ENCODE measurements at regions of chr17 and their contacts with region 1.

Region 1: DNA sequence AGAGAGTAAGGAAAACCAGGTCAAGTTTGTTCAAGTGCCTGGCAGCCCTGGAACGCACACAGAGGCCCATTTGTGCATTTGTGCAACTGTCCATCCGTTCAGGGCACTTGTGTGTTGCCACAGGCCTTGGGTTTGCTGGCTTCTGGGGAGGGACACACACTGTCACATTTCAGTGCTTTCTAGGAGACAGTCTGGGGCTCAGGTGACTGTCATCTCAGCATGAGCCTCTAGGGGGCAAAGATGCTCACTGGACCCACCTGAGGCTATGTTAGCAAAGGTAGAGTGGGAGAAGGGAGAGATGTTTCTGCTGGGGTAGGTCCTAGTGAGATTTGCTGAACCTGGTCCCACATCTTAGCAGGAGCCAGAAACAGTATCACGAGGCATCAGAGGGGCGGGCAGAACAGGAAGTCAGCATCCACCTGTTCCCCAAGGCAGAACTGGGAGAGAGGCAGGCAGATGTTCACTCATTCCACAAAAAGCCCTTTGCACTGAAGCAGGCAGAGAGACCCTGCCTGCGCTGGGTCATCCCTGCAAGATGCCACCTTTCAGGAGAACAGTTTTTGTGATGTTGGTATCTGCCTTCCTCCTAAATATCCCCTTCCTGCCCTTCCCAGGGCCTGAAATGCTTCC is 48.5 kb downstream of the RAI1 start:
- H3K4me3 Mint-ChIP-seq: no peak overlapping the region
- H3K27ac Mint-ChIP-seq: no peak overlapping the region
- H3K4me1 Mint-ChIP-seq: peaks cover 53% of the 10 kb centered on the region
- H3K27me3 Mint-ChIP-seq: peaks cover 4% of the 10 kb centered on the region

Region 2: DNA sequence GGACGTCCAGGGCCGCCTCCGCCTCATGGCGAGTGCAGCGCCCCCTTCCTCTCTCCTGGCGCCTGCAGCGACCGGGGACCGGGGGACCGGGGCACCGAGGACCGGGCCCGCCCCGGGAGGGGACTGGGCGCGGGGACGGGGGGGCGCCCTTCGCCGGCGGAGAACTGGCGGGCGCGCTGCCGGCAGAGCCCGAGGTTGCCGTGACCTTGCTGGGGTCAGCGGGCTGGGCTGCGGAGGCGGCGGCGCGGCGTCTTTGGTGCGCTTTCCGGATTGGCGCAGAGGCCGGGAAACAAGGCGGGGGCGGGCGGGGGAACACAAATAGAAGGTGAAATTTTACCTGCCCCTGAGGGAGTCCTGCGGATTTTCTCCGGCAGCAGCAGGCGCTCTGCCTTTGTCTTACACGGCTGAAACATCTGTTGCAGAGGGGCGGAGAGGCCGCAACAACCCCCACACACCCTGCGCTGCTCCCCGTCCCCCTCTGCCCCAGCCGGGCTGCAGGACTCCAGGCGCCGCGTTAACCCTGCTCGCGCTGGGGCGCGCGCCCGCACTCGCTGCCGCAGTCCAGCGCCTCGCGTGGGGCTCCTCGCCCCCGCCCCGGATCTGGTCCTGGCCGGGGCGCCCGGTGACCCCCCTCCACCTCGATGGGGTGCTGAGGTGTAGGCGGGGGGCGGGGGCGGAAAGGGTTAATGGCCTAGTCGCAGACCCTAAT is 53.5 kb after region 1 on chr17:
- intact Hi-C with region 1: loop called (anchors 10 kb)
- H3K4me3 Mint-ChIP-seq: peak overlapping the region; percentile 73
- H3K27ac Mint-ChIP-seq: no peak overlapping the region
- H3K4me1 Mint-ChIP-seq: peaks cover 48% of the 10 kb centered on the region
- H3K27me3 Mint-ChIP-seq: peaks cover 56% of the 10 kb centered on the region

Region 3: DNA sequence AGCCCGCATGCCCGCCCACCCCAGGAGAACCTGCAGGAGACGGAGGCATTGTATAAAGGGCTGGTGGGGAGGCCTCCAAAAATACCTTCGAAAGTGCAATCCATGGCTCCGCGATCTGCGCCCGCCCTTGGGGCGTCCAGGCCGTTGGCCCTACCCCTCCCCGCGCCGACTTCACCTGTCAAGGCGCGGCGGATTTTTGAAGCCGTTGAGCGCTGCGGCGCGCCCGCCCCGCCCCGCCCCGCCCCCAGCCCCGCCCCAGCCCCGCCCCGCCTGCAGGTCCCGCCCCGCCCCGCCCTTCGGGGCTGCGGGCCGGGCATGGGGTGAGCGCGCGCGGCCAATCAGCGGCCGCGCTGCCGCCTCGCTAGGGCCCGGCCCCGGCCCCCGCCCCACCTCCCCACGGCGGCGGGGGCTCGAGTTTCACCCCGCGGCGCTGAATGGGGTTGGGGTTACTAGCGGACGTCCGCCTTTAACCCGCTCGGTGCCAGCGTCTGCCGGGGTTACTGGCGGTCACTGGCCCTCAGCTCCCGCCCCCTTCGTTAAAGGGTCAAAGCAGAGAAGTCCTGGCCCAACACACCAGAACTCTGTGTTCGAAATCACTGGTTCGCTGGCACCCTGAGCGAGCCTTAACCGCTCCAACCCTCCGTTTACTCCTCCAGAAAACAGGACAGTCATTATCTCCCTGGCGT is 93.8 kb after region 1 on chr17:
- intact Hi-C with region 1: no loop called
- H3K4me3 Mint-ChIP-seq: peak overlapping the region; percentile 67
- H3K27ac Mint-ChIP-seq: peak overlapping the region; percentile 74
- H3K4me1 Mint-ChIP-seq: peaks cover 91% of the 10 kb centered on the region
- H3K27me3 Mint-ChIP-seq: no peaks in the 10 kb centered on the region

Region 4: GRCh38 chr17:17839791-17840707 is 110.3 kb after region 1 on chr17:
- intact Hi-C with region 1: no loop called
- H3K4me3 Mint-ChIP-seq: peak overlapping the region; percentile 79
- H3K27ac Mint-ChIP-seq: peak overlapping the region; percentile 97
- H3K4me1 Mint-ChIP-seq: peaks cover 66% of the 10 kb centered on the region
- H3K27me3 Mint-ChIP-seq: no peaks in the 10 kb centered on the region

Measured in dendritic cell treated with granulocyte-macrophage colony-stimulating factor and Interleukin-4, amounts not matched to agents 40 ng/mL and 50 ng/mL, for 4 days (primary cell).